ENCODE measurements at regions of chr2 and their contacts with region 1.

Region 1: GRCh38 chr2:85539361-85540132 is 579 bp downstream of the MAT2A start:
- DNase-seq: peak; percentile 80

Region 2: DNA sequence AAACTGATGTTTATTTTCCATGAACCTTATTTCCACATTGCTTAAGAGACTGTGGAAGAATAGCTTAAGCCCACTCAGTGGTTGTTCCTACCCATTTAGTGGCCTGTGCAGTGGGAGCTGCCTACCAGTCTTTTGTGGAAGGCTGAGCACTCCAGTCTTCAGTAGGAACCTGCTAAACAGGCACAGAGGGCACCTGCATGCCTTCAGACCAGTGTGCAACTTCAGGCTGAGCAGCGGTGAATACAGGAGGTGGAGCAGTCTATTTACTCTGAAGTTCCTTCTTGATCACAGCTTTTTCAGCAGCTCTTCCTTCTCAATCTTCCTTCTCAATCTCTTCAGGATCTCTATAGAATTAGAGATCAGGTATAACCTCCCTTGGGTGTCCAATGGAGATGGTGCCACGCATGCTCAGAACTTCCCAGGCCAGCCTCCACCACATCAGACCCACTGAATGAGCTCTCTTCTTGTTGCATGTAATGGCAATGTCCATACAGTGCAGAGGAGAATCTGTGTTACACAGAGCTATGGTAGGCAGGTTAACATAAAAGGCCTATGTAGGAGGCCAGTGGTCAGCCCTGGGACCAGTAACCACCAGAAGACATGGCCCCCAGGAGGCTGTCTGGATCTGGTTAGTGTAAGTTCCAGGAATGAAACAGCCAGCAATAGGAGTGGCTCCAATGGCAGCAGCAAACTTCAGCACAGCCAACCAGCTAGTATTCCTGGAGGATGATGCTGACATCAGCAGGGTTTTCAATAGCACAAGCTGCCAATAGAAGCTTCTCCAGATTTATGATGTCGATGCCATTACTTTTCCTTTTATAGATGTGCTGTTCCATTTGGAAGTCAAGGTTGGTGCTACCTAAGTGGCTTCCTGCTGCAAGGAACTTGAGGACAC is 48.4 kb before region 1 on chr2:
- in situ Hi-C with region 1: loop called (anchors 5 kb)
- DNase-seq: no peak

Region 3: DNA sequence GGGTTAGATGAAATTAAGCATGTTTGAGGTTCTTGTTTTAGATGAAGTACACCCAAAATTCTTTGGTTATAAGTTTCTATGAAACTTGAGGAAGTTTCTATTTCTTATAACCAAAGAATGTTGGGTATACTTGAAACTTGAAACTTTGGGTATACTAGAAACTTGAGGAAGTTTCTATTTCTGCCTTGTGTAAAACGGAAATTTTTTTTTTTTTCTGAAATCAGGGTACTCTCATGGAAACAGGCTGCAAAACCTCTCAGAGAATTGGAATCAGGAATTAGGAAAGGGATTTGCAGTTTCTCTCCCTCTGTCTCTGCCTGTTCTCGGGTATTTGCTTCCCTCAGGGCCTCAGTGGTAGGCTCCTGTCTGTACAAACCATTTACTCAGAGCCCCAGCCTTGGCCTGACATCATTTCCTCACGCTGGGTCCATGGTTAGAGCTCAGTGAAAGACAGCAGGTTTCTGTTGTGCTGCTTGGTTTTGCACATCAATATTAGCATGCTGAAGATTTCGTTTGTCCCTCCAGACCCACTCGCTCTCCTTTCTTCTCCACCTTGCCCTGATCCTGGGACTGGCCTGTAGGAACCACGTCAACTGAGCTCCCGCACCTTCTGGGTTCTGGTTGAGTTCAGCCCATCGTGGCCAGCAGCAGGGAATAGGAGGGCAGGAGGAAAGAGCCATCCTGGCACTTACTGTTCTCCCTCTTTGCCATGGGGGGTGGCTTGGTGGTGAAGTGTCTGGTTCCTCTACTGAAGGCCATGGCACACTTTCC is 459.7 kb after region 1 on chr2:
- in situ Hi-C with region 1: no loop called
- DNase-seq: peak; percentile 69

Measured in KBM-7 (cell line).